GM12878 (cell line): ENCODE measurements at regions of chr22 and their contacts with region 1.

Region 1: GRCh38 chr22:41780746-41781505 is 19.6 kb upstream of the CCDC134 start:
- DNase-seq: peak; percentile 90
- ATAC-seq: peak; percentile 97
- H3K4me3 ChIP-seq: peak overlapping the region; percentile 76
- H3K27ac ChIP-seq: peak overlapping the region; percentile 54
- H3K4me1 ChIP-seq: peaks cover 11% of the 10 kb centered on the region
- H3K27me3 ChIP-seq: no peaks in the 10 kb centered on the region
- CTCF ChIP-seq: no peak
- EP300 ChIP-seq: peak in 1 of 2 experiments; percentile 34; a peak in 1 of 4 replicates
- POLR2A ChIP-seq: peak; percentile 81
- RAD21 ChIP-seq: no peak

Region 2: DNA sequence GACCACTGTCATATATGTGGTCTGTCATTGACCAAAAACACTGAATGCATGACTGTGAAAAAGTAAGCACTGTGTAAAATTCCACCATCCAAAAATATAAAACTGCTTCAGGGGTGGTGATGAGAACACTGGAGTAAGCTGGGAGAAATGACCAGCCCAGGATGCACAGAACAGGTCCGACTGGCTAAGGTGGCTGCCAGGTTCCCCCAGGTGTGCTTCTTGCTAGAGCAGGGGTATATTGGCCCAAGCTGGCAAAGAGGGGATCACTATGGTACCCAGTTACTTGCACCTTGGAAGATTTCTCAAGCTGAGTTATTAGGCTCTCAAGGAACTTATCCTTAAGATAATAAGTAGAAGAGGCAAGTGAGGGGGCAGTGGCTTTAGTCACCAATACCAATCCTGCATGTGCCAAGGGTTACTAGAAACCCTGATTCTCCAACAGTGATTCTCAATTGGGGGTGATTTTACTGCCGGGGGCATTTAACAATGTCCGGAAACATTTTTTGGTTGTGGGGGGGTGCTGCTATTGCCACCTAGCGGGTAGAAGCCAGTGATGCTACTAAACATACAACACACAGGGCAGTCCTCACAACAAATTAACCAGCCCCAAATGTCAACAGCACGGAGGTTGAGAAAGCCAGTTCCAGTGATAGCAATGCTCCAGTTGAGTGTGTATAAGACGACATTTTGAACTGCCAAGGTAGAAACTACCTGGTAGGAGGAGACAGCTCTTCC is 108.0 kb before region 1 on chr22:
- CTCF ChIA-PET with region 1: no interaction called
- POLR2A ChIA-PET with region 1: no interaction called
- RAD21 ChIA-PET with region 1: no interaction called
- SMC1A ChIA-PET with region 1: no interaction called
- in situ Hi-C with region 1: no loop called
- intact Hi-C with region 1: no loop called
- DNase-seq: no peak
- ATAC-seq: peak; percentile 74
- H3K4me3 ChIP-seq: no peak overlapping the region
- H3K27ac ChIP-seq: no peak overlapping the region
- H3K4me1 ChIP-seq: no peaks in the 10 kb centered on the region
- H3K27me3 ChIP-seq: no peaks in the 10 kb centered on the region
- CTCF ChIP-seq: peak; percentile 27 to 48 (median 42); a peak in 3 of 6 replicates
- EP300 ChIP-seq: no peak
- POLR2A ChIP-seq: no peak
- RAD21 ChIP-seq: no peak

Region 3: GRCh38 chr22:41688365-41689211 is 92.3 kb before region 1 on chr22 and contains the start of gene SNU13:
- CTCF ChIA-PET with region 1: interaction called, 4 read pairs
- POLR2A ChIA-PET with region 1: interaction called, 13 read pairs
- RAD21 ChIA-PET with region 1: interaction called, 5 read pairs
- SMC1A ChIA-PET with region 1: no interaction called
- in situ Hi-C with region 1: no loop called
- intact Hi-C with region 1: no loop called
- DNase-seq: peak; percentile 73
- ATAC-seq: peak; percentile 93
- H3K4me3 ChIP-seq: peak within 1 kb of the TSS; percentile 87
- H3K27ac ChIP-seq: peak within 1 kb of the TSS; percentile 98
- H3K4me1 ChIP-seq: peaks cover 3% of the 10 kb centered on the region; the same call in 1 of the 2 replicates
- H3K27me3 ChIP-seq: no peaks in the 10 kb centered on the region
- CTCF ChIP-seq: no peak
- EP300 ChIP-seq: peak in 1 of 2 experiments; percentile 36; a peak in 1 of 4 replicates
- POLR2A ChIP-seq: peak; percentile 90
- RAD21 ChIP-seq: no peak
- polyA plus RNA-seq, gene SNU13: 611 to 870 TPM

Region 4: GRCh38 chr22:41752011-41752970 is 28.6 kb before region 1 on chr22:
- CTCF ChIA-PET with region 1: interaction called, 25 read pairs
- POLR2A ChIA-PET with region 1: interaction called, 12 read pairs
- RAD21 ChIA-PET with region 1: interaction called, 35 read pairs
- SMC1A ChIA-PET with region 1: interaction called, 35 read pairs
- in situ Hi-C with region 1: no loop called
- intact Hi-C with region 1: no loop called
- DNase-seq: peak; percentile 66
- ATAC-seq: peak; percentile 88
- H3K4me3 ChIP-seq: peak overlapping the region; percentile 32; the same call in 1 of the 2 replicates
- H3K27ac ChIP-seq: peak overlapping the region; percentile 66
- H3K4me1 ChIP-seq: peaks cover 39% of the 10 kb centered on the region
- H3K27me3 ChIP-seq: no peaks in the 10 kb centered on the region
- CTCF ChIP-seq: no peak
- EP300 ChIP-seq: 0 out of 4 replicates have a peak, but pooled peaks of 1 of the 2 experiments have one; percentile 17
- POLR2A ChIP-seq: no peak
- RAD21 ChIP-seq: no peak

Region 5: GRCh38 chr22:41768430-41768829 is 12.5 kb before region 1 on chr22:
- CTCF ChIA-PET with region 1: interaction called, 11 read pairs
- POLR2A ChIA-PET with region 1: interaction called, 7 read pairs
- RAD21 ChIA-PET with region 1: interaction called, 3 read pairs
- SMC1A ChIA-PET with region 1: interaction called, 8 read pairs
- in situ Hi-C with region 1: no loop called
- intact Hi-C with region 1: no loop called
- DNase-seq: no peak
- ATAC-seq: peak; percentile 59
- H3K4me3 ChIP-seq: no peak overlapping the region
- H3K27ac ChIP-seq: no peak overlapping the region
- H3K4me1 ChIP-seq: no peaks in the 10 kb centered on the region
- H3K27me3 ChIP-seq: no peaks in the 10 kb centered on the region
- CTCF ChIP-seq: no peak
- EP300 ChIP-seq: no peak
- POLR2A ChIP-seq: no peak
- RAD21 ChIP-seq: no peak

Region 6: DNA sequence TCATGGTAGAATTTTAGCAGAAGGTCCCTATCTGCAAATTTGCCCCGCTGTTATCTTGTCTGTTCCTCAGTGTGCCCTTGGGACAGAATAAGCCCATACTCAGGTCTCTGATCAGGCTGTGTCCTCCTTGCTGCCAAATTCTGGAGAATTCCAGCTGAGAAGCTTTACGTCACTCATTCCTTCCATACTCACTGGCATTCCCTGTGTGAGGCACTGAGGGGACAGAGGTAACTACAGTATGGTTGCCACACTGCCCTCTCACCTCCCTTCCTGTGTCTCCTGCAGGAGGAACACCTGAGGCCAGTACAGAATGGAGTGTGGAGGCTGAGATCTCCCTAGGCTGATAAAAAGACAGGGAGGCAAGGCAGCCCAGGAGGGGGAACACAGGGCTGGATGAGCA is 102.5 kb after region 1 on chr22:
- CTCF ChIA-PET with region 1: no interaction called
- POLR2A ChIA-PET with region 1: no interaction called
- RAD21 ChIA-PET with region 1: no interaction called
- SMC1A ChIA-PET with region 1: no interaction called
- in situ Hi-C with region 1: no loop called
- intact Hi-C with region 1: no loop called
- DNase-seq: no peak
- ATAC-seq: no peak
- H3K4me3 ChIP-seq: no peak overlapping the region
- H3K27ac ChIP-seq: peak overlapping the region; percentile 54
- H3K4me1 ChIP-seq: peaks cover 16% of the 10 kb centered on the region
- H3K27me3 ChIP-seq: no peaks in the 10 kb centered on the region
- CTCF ChIP-seq: no peak
- EP300 ChIP-seq: no peak
- POLR2A ChIP-seq: no peak
- RAD21 ChIP-seq: no peak

Region 7: GRCh38 chr22:42070517-42071422 is 289.8 kb after region 1 on chr22 and contains the start of gene NAGA:
- CTCF ChIA-PET with region 1: no interaction called
- POLR2A ChIA-PET with region 1: no interaction called
- RAD21 ChIA-PET with region 1: no interaction called
- SMC1A ChIA-PET with region 1: no interaction called
- in situ Hi-C with region 1: no loop called
- intact Hi-C with region 1: no loop called
- DNase-seq: peak; percentile 91
- ATAC-seq: peak; percentile 98
- H3K4me3 ChIP-seq: peak within 1 kb of the TSS; percentile 83
- H3K27ac ChIP-seq: peak within 1 kb of the TSS; percentile 88
- H3K4me1 ChIP-seq: peaks cover 19% of the 10 kb centered on the region
- H3K27me3 ChIP-seq: no peaks in the 10 kb centered on the region
- CTCF ChIP-seq: no peak
- EP300 ChIP-seq: no peak
- POLR2A ChIP-seq: peak; percentile 86
- RAD21 ChIP-seq: no peak
- polyA plus RNA-seq, gene NAGA: 9.3 to 9.8 TPM